Heart left ventricle (tissue), 16 donors: ENCODE measurements at regions of chr4 and their contacts with region 1.

Region 1: DNA sequence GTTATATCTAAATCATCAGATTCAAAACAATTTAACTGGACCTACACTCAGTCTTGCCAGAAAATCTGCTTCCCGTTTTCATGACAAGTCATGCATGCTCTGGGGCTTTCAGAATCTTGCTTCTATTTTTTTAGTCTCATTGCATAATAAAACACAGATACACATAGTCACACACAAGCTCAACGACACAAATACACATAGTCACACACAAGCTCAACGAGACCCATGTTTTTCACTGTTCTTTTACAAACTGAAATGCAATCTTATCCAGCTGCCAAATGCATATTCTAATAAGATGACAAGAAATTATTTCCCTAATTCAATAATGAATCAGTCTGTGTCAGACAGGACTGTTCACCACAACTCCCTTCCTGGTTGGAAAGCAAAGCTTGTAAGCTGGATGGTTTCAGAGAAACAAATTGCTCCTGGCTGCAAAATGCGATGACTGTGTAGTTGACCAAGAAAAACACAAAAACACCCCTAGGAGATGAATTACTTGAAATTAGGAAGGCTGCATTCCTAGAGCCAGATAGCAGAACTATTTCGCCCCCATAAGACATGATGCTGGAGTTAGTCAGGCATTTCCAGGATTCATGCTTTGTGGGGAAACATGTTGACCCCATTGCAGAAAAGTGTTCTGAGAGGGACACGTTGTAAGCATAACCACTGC is 208.7 kb downstream of the CHIC2 start:
- DNase-seq: peak in 2 of 5 donors; percentile 27 to 33
- ATAC-seq: peak; percentile 75 to 87 (median 82)
- H3K4me3 ChIP-seq: no peak overlapping the region
- H3K27ac ChIP-seq: peak overlapping the region in 9 of 12 donors; percentile 23 to 81 (median 72)
- H3K4me1 ChIP-seq: peaks cover 0 to 13% (median 0%) of the 10 kb centered on the region in 12 donors
- H3K27me3 ChIP-seq: no peaks in the 10 kb centered on the region
- CTCF ChIP-seq: no peak
- POLR2A ChIP-seq: no peak

Region 2: GRCh38 chr4:53714236-53715140 is 141.2 kb before region 1 on chr4:
- intact Hi-C with region 1: loop called in 1 of 10 experiments (anchors 10 kb)
- DNase-seq: no peak
- ATAC-seq: no peak
- H3K4me3 ChIP-seq: no peak overlapping the region
- H3K27ac ChIP-seq: peak overlapping the region in 1 of 12 donors; percentile 13
- H3K4me1 ChIP-seq: peaks cover 0 to 25% (median 0%) of the 10 kb centered on the region in 12 donors
- H3K27me3 ChIP-seq: no peaks in the 10 kb centered on the region
- CTCF ChIP-seq: no peak
- POLR2A ChIP-seq: no peak